ENCODE measurements at regions of chr1 and their contacts with region 1.

Region 1: DNA sequence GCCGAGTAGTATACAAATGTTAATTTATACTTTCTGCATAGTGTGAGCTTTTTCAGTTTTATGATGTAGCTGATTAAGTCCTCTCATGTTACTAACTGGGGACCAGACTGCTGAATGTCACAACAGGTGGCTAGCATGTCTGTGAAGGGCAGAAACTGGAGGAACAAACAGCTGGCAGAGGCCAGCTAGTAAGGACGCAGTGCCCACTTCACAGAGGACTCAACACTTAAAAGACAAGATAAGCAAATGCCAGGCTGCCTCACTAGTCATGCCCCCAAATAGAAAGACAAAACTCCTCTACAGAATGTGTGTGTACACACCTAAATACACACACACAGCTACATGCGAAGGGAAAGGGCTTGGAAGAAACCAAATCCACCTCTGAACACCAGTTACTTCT is 73.8 kb upstream of the ZNF678 start:
- DNase-seq: no peak
- ATAC-seq: no peak
- H3K4me3 ChIP-seq: no peak overlapping the region
- H3K27ac ChIP-seq: no peak overlapping the region
- H3K4me1 ChIP-seq: no peaks in the 10 kb centered on the region
- H3K27me3 ChIP-seq: peaks cover 1 to 19% of the 10 kb centered on the region in 2 experiments; a peak in 3 of 5 replicates
- CTCF ChIP-seq: no peak
- EP300 ChIP-seq: no peak
- POLR2A ChIP-seq: no peak
- RAD21 ChIP-seq: no peak

Region 2: DNA sequence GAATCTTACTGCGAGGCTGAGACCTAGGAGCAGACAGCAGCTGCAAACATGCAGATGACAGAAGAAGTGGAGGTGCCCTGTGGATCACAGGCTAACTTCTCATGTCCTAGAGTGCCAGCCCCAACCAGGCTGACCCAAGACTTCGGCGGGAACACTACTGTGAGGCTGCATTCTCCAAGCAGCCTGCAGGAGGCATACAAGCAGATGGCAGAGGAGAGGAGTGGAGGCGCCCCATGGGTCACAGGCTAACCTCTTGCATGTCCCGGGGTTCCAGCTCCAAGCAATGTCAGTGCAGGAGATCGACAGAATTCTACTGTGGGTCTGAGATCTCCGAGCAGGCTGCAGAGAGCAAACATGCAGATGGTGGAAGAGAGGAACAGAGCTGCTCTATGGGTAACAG is 24.3 kb before region 1 on chr1:
- CTCF ChIA-PET with region 1: no interaction called
- POLR2A ChIA-PET with region 1: no interaction called
- in situ Hi-C with region 1: no loop called
- intact Hi-C with region 1: no loop called
- DNase-seq: no peak
- ATAC-seq: peak; percentile 73
- H3K4me3 ChIP-seq: no peak overlapping the region
- H3K27ac ChIP-seq: no peak overlapping the region
- H3K4me1 ChIP-seq: no peaks in the 10 kb centered on the region
- H3K27me3 ChIP-seq: peaks cover 0 to 16% of the 10 kb centered on the region in 2 experiments; a peak in 1 of 5 replicates
- CTCF ChIP-seq: no peak
- EP300 ChIP-seq: no peak
- POLR2A ChIP-seq: no peak
- RAD21 ChIP-seq: no peak

Region 3: DNA sequence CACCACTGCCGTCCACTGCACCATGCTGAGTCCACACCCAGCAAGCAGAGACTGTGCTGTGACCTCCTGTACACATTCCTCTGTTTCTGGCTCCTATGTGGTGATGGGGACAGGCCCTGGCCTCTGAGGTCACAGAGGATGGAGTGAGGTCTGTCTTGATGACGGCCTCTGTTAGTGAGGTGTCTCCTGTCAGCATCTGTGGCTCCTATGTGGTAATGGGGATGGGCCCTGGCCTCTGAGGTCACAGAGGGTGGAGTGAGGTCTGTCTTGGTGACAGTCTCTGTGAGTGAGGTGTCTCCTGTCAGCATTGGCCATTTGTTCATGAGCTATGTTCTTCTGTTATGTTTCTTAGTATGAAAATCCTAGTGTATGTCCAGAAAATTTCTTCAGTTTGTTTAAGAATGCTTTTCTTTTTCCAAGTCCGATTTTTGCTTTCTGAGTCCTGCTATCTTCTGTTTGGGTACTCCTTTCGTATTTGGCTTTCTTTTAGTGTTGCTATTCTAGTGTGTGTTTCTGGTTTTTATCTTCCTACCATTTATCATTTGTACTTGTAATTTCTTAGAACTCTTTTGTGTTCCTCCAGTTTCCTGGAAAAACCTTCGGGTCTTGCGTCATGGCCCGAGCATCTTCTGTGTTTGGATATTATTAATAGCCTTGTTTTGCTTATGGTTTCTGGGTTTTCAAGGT is 259.1 kb after region 1 on chr1:
- CTCF ChIA-PET with region 1: no interaction called
- POLR2A ChIA-PET with region 1: no interaction called
- in situ Hi-C with region 1: loop called (anchors 10 kb)
- intact Hi-C with region 1: no loop called
- DNase-seq: no peak
- ATAC-seq: no peak
- H3K4me3 ChIP-seq: no peak overlapping the region
- H3K27ac ChIP-seq: no peak overlapping the region
- H3K4me1 ChIP-seq: no peaks in the 10 kb centered on the region
- H3K27me3 ChIP-seq: no peaks in the 10 kb centered on the region
- CTCF ChIP-seq: no peak
- EP300 ChIP-seq: no peak
- POLR2A ChIP-seq: no peak
- RAD21 ChIP-seq: no peak

Region 4: GRCh38 chr1:228457396-228458176 is 968.0 kb after region 1 on chr1:
- CTCF ChIA-PET with region 1: no interaction called
- POLR2A ChIA-PET with region 1: no interaction called
- in situ Hi-C with region 1: no loop called
- intact Hi-C with region 1: loop called (anchors 10 kb)
- DNase-seq: no peak
- ATAC-seq: no peak
- H3K4me3 ChIP-seq: no peak overlapping the region
- H3K27ac ChIP-seq: no peak overlapping the region
- H3K4me1 ChIP-seq: peaks cover 18% of the 10 kb centered on the region
- H3K27me3 ChIP-seq: 0 out of 5 replicates have a peak, but pooled peaks cover 0 to 4% of the 10 kb centered on the region in 2 experiments
- CTCF ChIP-seq: no peak
- EP300 ChIP-seq: no peak
- POLR2A ChIP-seq: no peak
- RAD21 ChIP-seq: no peak